ENCODE measurements at regions of chr14 and their contacts with region 1.

Region 1: GRCh38 chr14:102442241-102443211 is 67.0 kb downstream of the ANKRD9 start:
- ATAC-seq: peak in 1 of 8 experiments; percentile 27
- H3K4me3 ChIP-seq: no peak overlapping the region
- H3K27ac ChIP-seq: no peak overlapping the region
- H3K4me1 ChIP-seq: no peaks in the 10 kb centered on the region

Region 2: DNA sequence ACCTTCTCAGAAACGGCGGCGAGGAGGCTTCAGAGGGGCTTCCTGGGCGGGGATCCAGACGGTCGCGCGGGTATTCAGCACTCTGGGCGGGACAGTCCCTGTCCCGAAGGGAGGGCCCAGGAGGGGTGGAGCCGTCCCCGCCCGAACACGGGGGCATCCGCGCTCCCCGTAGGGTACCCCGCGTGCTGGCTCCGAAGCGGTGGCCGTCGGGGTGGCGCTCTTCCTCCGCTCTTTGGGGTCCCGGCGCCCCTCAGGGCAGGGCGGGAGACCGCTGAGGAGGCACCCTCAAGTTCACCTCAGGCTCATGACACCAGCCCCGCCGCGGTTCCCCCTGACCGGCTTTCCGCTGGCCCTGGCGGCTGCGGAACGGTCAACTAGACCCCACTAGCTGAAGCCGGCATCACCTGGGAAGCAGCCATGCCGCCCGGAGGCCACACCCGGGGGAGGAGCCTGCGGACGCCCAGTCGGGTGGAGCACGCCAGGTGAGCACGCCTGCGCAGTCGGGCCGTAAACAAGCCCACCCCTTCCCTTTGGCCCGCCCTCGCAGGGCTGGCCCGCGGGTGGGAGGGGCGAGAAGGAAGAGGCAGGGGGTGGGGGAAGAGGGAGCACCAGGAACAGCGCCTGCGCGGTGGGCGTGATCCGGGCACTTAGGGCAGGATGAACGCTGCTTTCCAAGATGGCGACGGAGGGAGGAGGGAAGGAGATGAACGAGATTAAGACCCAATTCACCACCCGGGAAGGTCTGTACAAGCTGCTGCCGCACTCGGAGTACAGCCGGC is 303.1 kb before region 1 on chr14 and contains the start of gene WDR20:
- in situ Hi-C with region 1: no loop called
- ATAC-seq: peak; percentile 84 to 95 (median 91)
- H3K4me3 ChIP-seq: peak within 1 kb of the TSS; percentile 73 to 99 (median 93)
- H3K27ac ChIP-seq: peak within 1 kb of the TSS; percentile 86 to 88
- H3K4me1 ChIP-seq: peaks cover 8 to 17% of the 10 kb centered on the region in 2 donors
- total RNA-seq, gene WDR20: 15.6 to 32.3 (median 24.8) TPM

Region 3: DNA sequence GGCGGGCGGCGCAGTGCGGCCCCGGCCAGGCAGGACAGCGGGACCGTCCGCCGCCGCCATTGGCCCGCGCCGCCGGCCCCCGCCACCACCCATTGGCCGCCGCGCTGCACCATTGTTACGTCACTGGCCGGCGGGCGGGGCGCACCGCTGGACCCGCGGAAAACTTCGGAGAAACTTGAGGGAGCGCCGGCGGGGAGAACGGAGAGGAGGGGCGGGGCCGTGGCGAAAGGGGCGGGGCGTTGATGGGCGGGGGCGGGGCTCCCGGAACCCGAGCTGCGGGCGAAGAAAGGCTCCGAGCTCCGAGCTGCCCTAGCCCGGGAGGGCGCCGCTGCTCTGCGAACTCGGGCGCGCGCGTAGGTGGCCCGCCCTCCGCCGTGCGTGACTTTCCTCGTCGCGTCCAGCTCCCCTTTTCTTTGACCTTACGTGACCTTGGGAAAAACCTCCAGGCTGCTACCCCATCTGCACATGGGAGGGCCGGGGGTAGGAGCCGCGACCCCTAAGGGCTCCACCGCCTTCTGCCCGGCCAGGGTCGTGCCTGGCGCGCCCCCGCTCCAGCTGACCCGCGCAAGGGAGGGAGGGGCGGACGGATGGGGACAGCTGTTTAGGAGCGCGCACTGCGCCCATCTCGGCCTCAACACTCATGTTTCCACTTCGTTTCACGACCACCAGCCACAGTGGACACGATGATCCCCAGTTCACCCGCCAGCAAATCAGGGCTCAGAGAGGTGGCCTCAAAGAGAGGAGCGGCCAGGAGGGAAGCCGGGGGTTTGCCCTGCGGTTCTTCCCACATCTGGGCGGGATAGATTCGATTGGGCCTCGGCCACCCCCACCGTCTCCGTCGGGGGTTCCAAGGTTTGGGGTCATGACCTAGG is 67.5 kb after region 1 on chr14 and contains the start of gene ANKRD9:
- in situ Hi-C with region 1: loop called in 2 of 9 experiments (anchors 10 kb)
- ATAC-seq: peak; percentile 75 to 92 (median 82)
- H3K4me3 ChIP-seq: peak within 1 kb of the TSS; percentile 62 to 96 (median 66)
- H3K27ac ChIP-seq: peak within 1 kb of the TSS in 1 of 2 donors; percentile 57
- H3K4me1 ChIP-seq: peaks cover 4 to 12% of the 10 kb centered on the region in 2 donors
- total RNA-seq, gene ANKRD9: 1.7 to 12.7 (median 7.6) TPM

Measured in motor neuron (in vitro differentiated cells).